Left lung (tissue), 14 donors: ENCODE measurements at regions of chr20 and their contacts with region 1.

Region 1: GRCh38 chr20:20824924-20825584 is 112.6 kb upstream of the RALGAPA2 start:
- DNase-seq: peak; percentile 63 to 83 (median 74)
- ATAC-seq: peak; percentile 84
- H3K4me3 ChIP-seq: no peak overlapping the region
- H3K27ac ChIP-seq: no peak overlapping the region
- H3K4me1 ChIP-seq: peaks cover 0 to 38% of the 10 kb centered on the region in 2 donors
- H3K27me3 ChIP-seq: no peaks in the 10 kb centered on the region
- CTCF ChIP-seq: peak; percentile 78 to 87

Region 2: DNA sequence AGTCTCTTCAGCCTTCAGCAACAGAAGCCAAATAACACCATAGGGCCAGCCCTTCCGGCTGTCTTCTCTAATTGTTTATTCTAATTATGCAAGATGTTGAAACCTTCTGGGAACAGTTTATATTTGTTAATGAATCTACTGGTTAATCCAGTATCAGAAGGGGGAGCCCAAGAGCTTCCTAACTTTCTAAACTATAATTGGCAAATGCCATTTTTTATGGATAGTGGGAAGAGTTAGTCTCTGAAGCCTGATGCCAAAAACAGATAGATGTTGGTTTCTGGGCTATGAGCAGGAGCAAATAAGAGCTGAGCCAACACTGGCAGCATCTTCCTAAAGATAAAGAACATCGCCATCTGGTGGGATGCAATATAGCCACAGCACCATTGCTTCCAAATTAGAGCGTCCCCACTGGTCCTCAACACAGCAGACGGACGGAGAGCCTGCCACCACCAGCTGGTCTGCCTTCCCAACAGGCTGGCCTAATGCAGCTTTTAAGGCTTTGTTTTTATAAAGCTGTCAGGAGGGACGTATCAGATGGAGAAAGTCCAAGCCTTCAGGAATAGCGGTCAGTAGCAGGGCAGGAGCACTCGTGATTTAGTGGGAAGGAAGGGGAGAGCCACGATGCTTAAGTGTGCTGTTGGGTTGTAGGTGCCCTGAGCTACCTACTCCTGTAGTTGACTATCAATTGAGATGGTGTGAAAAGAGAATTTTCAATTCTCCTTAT is 231.4 kb before region 1 on chr20:
- intact Hi-C with region 1: loop called in 1 of 2 experiments (anchors 10 kb)
- DNase-seq: peak in 3 of 4 donors; percentile 33 to 93 (median 91)
- ATAC-seq: peak; percentile 77
- H3K4me3 ChIP-seq: no peak overlapping the region
- H3K27ac ChIP-seq: peak overlapping the region; percentile 3 to 51
- H3K4me1 ChIP-seq: peaks cover 0 to 11% of the 10 kb centered on the region in 2 donors
- H3K27me3 ChIP-seq: no peaks in the 10 kb centered on the region
- CTCF ChIP-seq: peak in 1 of 2 donors; percentile 28

Region 3: DNA sequence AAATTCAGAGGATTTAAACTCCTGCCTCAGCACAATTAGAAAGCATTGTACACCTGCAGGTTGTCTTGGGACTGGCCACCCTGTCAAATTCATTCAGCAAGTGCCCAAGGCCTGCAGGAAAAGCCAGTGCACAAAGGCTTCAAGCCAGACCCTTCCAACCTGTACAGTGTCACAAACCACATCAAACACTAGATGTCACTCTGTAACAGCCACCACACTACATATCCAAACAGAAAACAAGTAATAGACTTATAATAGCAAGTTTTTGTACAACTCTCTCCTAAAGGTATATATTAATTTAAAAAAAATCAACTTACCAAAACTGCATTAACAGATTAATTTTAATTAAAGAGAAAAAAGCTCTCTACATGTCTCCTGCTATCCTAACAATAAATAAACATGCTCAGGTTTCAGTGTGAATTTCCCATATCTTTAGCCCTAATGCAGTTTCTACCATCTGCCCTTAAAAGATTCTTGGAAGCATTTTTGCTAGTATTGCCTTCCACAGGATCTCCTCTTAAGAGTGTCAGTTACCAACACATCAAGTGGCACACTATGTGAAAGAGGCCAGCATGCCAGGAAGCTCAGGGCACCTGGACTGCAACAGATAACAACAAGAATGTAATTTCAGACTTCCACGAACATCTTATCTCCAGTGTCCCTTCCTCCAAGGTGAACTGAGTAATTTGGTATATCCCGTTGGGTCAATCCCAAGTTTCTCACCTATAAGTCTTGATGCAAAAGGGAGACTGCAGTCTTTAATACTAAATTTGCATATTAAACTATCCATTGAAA is 160.1 kb before region 1 on chr20:
- intact Hi-C with region 1: loop called in 1 of 2 experiments (anchors 5 kb)
- DNase-seq: peak in 2 of 4 donors; percentile 13 to 51
- ATAC-seq: peak; percentile 86
- H3K4me3 ChIP-seq: no peak overlapping the region
- H3K27ac ChIP-seq: peak overlapping the region in 1 of 2 donors; percentile 7
- H3K4me1 ChIP-seq: peaks cover 12 to 50% of the 10 kb centered on the region in 2 donors
- H3K27me3 ChIP-seq: no peaks in the 10 kb centered on the region
- CTCF ChIP-seq: peak; percentile 38 to 44

Region 4: DNA sequence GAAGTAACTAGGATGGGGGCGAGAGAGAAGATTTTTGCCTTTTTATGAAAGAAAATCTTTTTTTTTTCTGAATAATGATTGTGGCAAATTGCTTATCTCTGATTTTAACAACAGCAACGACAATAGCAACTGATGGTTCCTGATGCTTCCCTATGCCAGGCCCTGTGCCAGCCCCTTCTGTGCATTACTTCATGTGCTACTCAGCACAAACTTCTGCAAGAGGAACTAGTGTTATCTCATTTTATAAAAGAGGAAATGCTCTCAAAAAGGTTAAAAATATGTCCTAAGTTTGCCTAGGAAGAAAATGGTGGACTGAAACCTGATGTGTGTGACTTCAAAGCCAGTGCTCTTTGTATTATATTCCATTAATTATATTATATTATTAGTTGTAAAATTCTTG is 38.6 kb before region 1 on chr20:
- intact Hi-C with region 1: no loop called
- DNase-seq: peak in 2 of 4 donors; percentile 60 to 77
- ATAC-seq: peak; percentile 38
- H3K4me3 ChIP-seq: no peak overlapping the region
- H3K27ac ChIP-seq: peak overlapping the region in 1 of 2 donors; percentile 75
- H3K4me1 ChIP-seq: peaks cover 0 to 30% of the 10 kb centered on the region in 2 donors
- H3K27me3 ChIP-seq: no peaks in the 10 kb centered on the region
- CTCF ChIP-seq: no peak